Right lobe of liver (tissue), 6 donors: ENCODE measurements at regions of chr1 and their contacts with region 1.

Region 1: DNA sequence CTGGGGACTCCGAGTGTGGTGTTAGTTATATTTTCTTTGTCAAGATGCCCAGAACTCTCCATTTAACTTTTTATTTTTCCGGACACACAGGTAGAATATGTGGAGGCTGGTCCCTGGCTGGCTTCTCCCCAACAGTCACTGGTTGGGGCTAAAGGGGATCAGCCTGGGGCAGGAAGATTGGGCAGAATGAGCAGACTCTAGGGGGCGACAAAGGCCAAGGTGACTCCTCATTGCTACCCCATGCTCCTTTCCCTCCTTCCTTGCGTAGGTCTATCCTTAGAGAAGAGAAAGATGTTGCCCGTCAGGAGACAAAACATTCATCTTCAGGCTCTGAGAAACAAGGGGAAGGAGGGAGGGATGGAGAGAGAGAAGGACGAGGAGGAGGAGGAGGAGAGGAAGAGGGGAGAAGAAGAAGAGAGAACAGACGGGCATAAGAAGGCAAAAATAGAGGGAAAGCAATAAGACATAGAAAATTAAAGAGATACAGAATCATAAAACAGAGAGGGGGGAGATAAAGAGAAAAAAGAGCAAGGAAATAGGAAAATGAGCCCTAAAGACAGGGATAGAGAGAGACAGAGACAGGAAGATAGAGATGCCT is 89.9 kb downstream of the FOXD2 start:
- DNase-seq: peak in 2 of 3 donors; percentile 42 to 63
- ATAC-seq: peak; percentile 63 to 81 (median 70)
- H3K4me3 ChIP-seq: no peak overlapping the region
- H3K27ac ChIP-seq: no peak overlapping the region
- H3K4me1 ChIP-seq: peaks cover 0 to 23% (median 6%) of the 10 kb centered on the region in 4 donors
- H3K27me3 ChIP-seq: no peaks in the 10 kb centered on the region
- CTCF ChIP-seq: peak; percentile 64 to 69 (median 66)
- POLR2A ChIP-seq: no peak

Region 2: GRCh38 chr1:47569681-47570470 is 42.1 kb after region 1 on chr1:
- intact Hi-C with region 1: no loop called
- DNase-seq: no peak
- ATAC-seq: peak; percentile 43 to 88 (median 56)
- H3K4me3 ChIP-seq: no peak overlapping the region
- H3K27ac ChIP-seq: no peak overlapping the region
- H3K4me1 ChIP-seq: no peaks in the 10 kb centered on the region
- H3K27me3 ChIP-seq: no peaks in the 10 kb centered on the region
- CTCF ChIP-seq: peak; percentile 22 to 42 (median 38)
- POLR2A ChIP-seq: no peak

Region 3: DNA sequence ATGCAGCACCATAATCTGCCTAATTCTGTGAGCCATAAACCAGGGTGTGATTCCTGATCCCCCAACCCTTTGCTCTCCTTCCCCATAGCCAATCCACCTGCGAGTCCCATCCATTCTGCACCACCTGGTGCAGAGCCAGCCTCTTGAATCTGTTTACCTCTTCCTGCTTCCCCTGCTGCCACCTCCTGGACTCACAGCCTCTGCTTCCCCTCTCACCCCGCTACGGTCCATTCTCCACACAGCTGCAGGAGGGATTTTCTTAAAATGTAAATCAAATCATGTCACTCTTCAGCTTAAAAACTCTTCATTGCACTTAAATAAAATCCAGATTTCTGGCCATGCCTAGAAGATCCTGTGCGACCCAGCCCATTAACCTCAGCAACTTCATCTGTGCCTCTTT is 96.8 kb after region 1 on chr1:
- intact Hi-C with region 1: loop called in 1 of 2 experiments (anchors 5 kb)
- DNase-seq: peak in 2 of 3 donors; percentile 37 to 63
- ATAC-seq: peak; percentile 64 to 80 (median 77)
- H3K4me3 ChIP-seq: no peak overlapping the region
- H3K27ac ChIP-seq: no peak overlapping the region
- H3K4me1 ChIP-seq: no peaks in the 10 kb centered on the region
- H3K27me3 ChIP-seq: no peaks in the 10 kb centered on the region
- CTCF ChIP-seq: peak; percentile 14 to 47 (median 28)
- POLR2A ChIP-seq: no peak

Region 4: GRCh38 chr1:47725992-47726855 is 198.5 kb after region 1 on chr1:
- intact Hi-C with region 1: loop called in 1 of 2 experiments (anchors 10 kb)
- DNase-seq: peak; percentile 77 to 83 (median 81)
- ATAC-seq: peak; percentile 81 to 90 (median 85)
- H3K4me3 ChIP-seq: no peak overlapping the region
- H3K27ac ChIP-seq: no peak overlapping the region
- H3K4me1 ChIP-seq: peaks cover 0 to 25% (median 4%) of the 10 kb centered on the region in 4 donors
- H3K27me3 ChIP-seq: no peaks in the 10 kb centered on the region
- CTCF ChIP-seq: peak; percentile 83 to 94 (median 88)
- POLR2A ChIP-seq: no peak